Adrenal gland (tissue), 19 donors: ENCODE measurements at regions of chr3 and their contacts with region 1.

Region 1: GRCh38 chr3:192802957-192803899 is 75.9 kb upstream of the FGF12 start:
- DNase-seq: no peak
- H3K4me3 ChIP-seq: no peak overlapping the region
- H3K27ac ChIP-seq: no peak overlapping the region
- H3K4me1 ChIP-seq: no peaks in the 10 kb centered on the region
- H3K27me3 ChIP-seq: no peaks in the 10 kb centered on the region
- CTCF ChIP-seq: peak; percentile 46 to 63 (median 54)
- POLR2A ChIP-seq: no peak

Region 2: GRCh38 chr3:192566706-192567290 is 236.4 kb before region 1 on chr3:
- intact Hi-C with region 1: loop called (anchors 5 to 10 kb)
- DNase-seq: peak; percentile 68 to 92 (median 87)
- H3K4me3 ChIP-seq: no peak overlapping the region
- H3K27ac ChIP-seq: no peak overlapping the region
- H3K4me1 ChIP-seq: peaks cover 0 to 17% of the 10 kb centered on the region in 2 donors
- H3K27me3 ChIP-seq: no peaks in the 10 kb centered on the region
- CTCF ChIP-seq: peak; percentile 64 to 88 (median 74)
- POLR2A ChIP-seq: no peak

Region 3: DNA sequence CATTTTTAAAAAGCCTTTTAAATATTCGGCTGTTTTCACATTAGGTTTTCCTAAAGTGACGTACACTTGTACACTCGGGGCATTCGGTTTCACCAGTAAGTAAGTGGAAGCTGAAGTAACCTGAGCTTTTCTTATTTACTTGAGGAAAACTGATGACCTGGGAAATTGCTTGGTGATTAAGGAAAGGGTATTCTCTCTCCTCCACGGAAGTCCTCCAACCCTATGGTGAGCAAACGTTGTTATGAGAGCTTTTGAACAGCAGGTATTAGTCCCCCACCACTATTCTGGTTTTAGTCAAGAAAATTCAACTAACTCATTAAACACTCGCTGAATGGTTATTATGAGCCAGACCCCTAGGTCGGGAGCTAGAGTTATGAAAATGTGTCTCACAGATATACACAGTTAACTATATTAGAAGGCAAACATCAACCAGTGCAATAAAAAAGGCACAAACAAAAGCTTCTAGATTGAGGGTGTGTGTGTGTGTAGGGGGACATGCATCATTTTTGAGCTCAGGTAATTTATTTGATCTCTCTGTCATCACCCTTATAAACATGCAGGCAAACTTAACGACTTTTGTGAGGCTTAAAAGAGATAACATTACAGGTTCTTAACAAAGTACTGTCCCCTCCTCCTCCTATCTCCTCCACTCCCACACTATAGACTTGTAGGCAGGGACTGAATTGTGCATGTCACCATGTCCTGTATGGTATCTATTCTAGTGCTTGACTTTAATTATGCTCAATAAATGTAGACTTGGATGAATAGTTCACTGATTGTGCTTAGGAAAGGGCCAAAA is 257.7 kb after region 1 on chr3:
- intact Hi-C with region 1: no loop called
- DNase-seq: no peak
- H3K4me3 ChIP-seq: no peak overlapping the region
- H3K27ac ChIP-seq: no peak overlapping the region
- H3K4me1 ChIP-seq: no peaks in the 10 kb centered on the region
- H3K27me3 ChIP-seq: no peaks in the 10 kb centered on the region
- CTCF ChIP-seq: no peak
- POLR2A ChIP-seq: no peak

Region 4: DNA sequence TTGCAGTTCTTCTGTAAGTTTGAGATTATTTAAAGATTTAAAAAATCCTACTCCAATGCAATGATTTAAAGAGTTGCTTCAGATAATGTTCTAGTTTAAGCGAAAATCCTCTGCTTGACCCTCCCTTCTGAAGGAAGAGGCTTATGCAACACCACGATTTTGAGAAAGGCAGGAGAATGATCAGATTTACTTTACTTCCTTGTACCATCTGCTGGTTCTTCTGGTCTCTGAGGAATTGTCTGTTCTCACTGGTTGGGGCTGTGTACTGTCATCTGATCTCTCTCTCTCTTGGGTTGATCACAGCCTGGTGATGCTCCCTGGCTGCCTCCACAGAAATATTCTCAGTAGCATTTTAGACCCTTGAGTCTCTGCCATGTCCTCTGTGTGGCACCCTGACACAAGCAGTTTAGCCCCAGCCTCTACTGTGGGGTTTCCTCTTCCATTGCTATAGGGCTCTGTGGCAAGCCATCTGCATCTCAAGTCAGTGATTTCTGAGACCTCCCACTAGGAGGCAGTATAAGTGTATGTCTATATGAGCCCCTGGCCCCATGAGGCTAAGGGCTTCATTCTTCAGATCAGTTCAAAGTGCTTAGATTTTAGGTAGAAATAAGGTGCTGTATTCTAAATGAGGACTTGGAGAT is 387.0 kb after region 1 on chr3:
- intact Hi-C with region 1: no loop called
- DNase-seq: peak in 6 of 7 donors; percentile 16 to 59 (median 23)
- H3K4me3 ChIP-seq: no peak overlapping the region
- H3K27ac ChIP-seq: no peak overlapping the region
- H3K4me1 ChIP-seq: no peaks in the 10 kb centered on the region
- H3K27me3 ChIP-seq: no peaks in the 10 kb centered on the region
- CTCF ChIP-seq: peak; percentile 25 to 56 (median 42)
- POLR2A ChIP-seq: no peak